Left ventricle myocardium inferior (tissue), 1 donor: ENCODE measurements at regions of chr17 and their contacts with region 1.

Region 1: DNA sequence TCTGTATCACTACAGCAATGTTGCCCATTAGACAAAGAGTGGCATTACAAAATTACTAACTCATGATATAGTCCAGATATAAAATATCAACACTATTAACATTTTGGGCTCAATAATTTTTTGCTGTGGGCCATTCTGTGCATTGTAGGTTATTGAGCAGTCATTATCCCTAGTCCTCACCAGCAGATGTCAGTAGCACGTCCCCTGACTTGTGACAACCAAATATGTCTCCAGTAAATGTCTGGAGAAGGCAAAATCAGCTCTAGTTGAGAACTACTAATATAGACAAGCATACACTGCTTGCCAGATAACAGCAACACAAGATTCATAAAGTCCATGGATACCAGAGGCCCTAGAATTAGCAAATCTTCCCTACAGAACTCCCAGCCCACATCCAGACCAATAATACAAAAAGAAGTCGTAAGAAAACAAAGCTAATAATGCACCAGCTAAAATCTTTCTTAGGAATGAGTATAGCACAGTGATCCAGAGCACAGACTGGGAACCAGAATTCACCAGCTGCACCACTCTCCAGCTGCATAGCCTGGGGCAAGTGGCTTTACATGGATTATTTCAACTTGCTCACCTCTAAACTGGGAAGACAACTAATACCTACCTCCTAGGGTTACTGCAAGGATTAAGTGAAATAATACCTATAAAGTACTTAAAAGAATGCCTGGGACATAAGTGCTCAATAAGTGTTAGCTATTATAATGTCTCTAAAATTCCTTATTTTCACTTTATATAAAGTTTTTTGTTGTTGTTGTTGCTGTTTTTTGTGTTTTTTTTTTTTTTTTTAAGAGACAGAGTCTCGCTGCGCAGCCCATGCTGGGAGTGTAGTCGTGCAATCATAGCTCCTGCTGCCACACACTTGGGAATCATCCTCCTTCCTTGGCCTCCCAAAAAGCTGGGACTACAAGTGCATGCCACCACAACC is 23.7 kb downstream of the HELZ start:
- DNase-seq: no peak
- H3K4me3 ChIP-seq: no peak overlapping the region
- H3K27ac ChIP-seq: no peak overlapping the region
- H3K4me1 ChIP-seq: peaks cover 55% of the 10 kb centered on the region
- H3K27me3 ChIP-seq: no peaks in the 10 kb centered on the region
- CTCF ChIP-seq: peak; percentile 73

Region 2: GRCh38 chr17:67293251-67294203 is 72.2 kb after region 1 on chr17:
- intact Hi-C with region 1: loop called (anchors 5 kb)
- DNase-seq: peak; percentile 61
- H3K4me3 ChIP-seq: peak overlapping the region; percentile 19
- H3K27ac ChIP-seq: no peak overlapping the region
- H3K4me1 ChIP-seq: peaks cover 33% of the 10 kb centered on the region
- H3K27me3 ChIP-seq: no peaks in the 10 kb centered on the region
- CTCF ChIP-seq: peak; percentile 90

Region 3: GRCh38 chr17:67359960-67360773 is 138.8 kb after region 1 on chr17:
- intact Hi-C with region 1: loop called (anchors 10 kb)
- DNase-seq: no peak
- H3K4me3 ChIP-seq: no peak overlapping the region
- H3K27ac ChIP-seq: peak overlapping the region; percentile 1
- H3K4me1 ChIP-seq: peaks cover 78% of the 10 kb centered on the region
- H3K27me3 ChIP-seq: no peaks in the 10 kb centered on the region
- CTCF ChIP-seq: peak; percentile 33